Activated CD4-positive, alpha-beta T cell treated with anti-CD3 and anti-CD28 coated beads for 36 hours (primary cell): ENCODE measurements at regions of chr5 and their contacts with region 1.

Region 1: DNA sequence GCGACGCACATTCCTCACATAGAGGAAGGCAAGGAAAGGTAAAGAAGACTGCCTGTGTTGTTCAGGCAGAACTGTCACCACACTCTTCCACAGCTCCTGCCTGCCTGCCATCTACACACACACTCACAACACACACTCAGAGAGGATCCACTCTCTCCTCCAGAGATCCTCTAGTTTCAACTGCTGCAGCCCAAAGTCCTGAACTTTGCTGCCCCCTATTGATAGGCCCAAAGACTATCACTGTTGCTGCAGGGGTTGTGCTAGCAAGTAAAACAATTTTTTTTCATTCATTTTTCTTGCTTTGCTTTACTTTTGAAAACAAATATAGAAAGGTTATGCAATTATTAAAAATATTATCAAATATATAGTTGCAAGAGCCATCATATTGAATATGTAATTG is 5.9 kb upstream of the CFAP90 start:
- DNase-seq: peak; percentile 57
- ATAC-seq: peak; percentile 71
- H3K4me3 Mint-ChIP-seq: no peak overlapping the region
- H3K27ac Mint-ChIP-seq: no peak overlapping the region
- H3K4me1 Mint-ChIP-seq: peaks cover 26% of the 10 kb centered on the region
- H3K27me3 Mint-ChIP-seq: no peaks in the 10 kb centered on the region

Region 2: GRCh38 chr5:7754992-7755596 is 101.8 kb before region 1 on chr5:
- CTCF ChIA-PET with region 1: interaction called, 3 read pairs
- POLR2A ChIA-PET with region 1: no interaction called
- intact Hi-C with region 1: loop called in 1 of 2 experiments (anchors 5 kb)
- DNase-seq: peak; percentile 74
- ATAC-seq: peak; percentile 61
- H3K4me3 Mint-ChIP-seq: no peak overlapping the region
- H3K27ac Mint-ChIP-seq: no peak overlapping the region
- H3K4me1 Mint-ChIP-seq: no peaks in the 10 kb centered on the region
- H3K27me3 Mint-ChIP-seq: peaks cover 29% of the 10 kb centered on the region

Region 3: GRCh38 chr5:7927466-7928375 is 70.9 kb after region 1 on chr5:
- CTCF ChIA-PET with region 1: no interaction called
- POLR2A ChIA-PET with region 1: no interaction called
- intact Hi-C with region 1: no loop called
- DNase-seq: peak; percentile 68
- ATAC-seq: peak; percentile 78
- H3K4me3 Mint-ChIP-seq: no peak overlapping the region
- H3K27ac Mint-ChIP-seq: no peak overlapping the region
- H3K4me1 Mint-ChIP-seq: peaks cover 5% of the 10 kb centered on the region
- H3K27me3 Mint-ChIP-seq: peaks cover 17% of the 10 kb centered on the region